ENCODE measurements at regions of chr4 and their contacts with region 1.

Region 1: DNA sequence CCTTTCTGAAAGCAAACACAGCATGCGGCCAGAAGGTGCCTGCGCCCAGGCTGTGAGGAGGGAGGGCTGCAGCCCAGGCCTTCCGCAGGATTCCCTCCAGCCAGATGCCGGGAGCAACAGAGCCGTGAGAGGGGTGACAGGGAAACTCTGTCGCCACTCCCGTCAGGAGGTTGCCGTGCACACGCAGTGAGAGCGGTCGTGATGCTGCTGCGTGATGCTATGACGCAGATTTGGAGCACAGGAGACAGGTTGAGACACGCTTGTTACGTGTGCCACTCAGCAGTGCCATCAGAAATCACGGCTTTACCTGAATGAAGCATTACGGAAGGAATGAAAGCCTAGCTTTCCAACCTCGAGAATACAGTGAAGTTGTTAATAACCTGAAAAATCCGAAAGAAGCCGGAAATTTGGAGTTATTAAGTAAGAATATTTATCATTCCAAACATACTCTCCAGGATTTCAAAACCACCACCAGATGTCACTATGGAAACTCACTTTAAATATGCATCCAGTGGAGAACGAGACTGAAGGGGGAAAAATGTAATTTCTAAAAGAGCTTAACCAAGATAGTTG is 54.4 kb downstream of the FAT1 start:
- DNase-seq: no peak
- H3K4me3 ChIP-seq: peak overlapping the region in 1 of 2 donors; percentile 50
- H3K27ac ChIP-seq: no peak overlapping the region
- H3K4me1 ChIP-seq: peaks cover 0 to 8% of the 10 kb centered on the region in 2 donors
- H3K27me3 ChIP-seq: no peaks in the 10 kb centered on the region
- CTCF ChIP-seq: peak in 2 of 3 experiments; percentile 52 to 80

Region 2: GRCh38 chr4:186936496-186937375 is 267.5 kb after region 1 on chr4:
- intact Hi-C with region 1: loop called (anchors 10 kb)
- DNase-seq: no peak
- H3K4me3 ChIP-seq: peak overlapping the region in 1 of 2 donors; percentile 31
- H3K27ac ChIP-seq: peak overlapping the region in 1 of 2 donors; percentile 52
- H3K4me1 ChIP-seq: peaks cover 0 to 3% of the 10 kb centered on the region in 2 donors
- H3K27me3 ChIP-seq: no peaks in the 10 kb centered on the region
- CTCF ChIP-seq: peak in 1 of 3 experiments; percentile 22